Activated T-helper 1 cell treated with anti-CD3 and anti-CD28 coated beads, Interleukin-12 subunit alpha, Interleukin-12 subunit beta, Interleukin-2, Interleukin-4 antibody, amounts not matched to agents 30 ng/mL and 10 ng/mL and 1 ng/mL, durations not matched to agents 14 hours and 24 hours and 36 hours (primary cell): ENCODE measurements at regions of chr13 and their contacts with region 1.

Region 1: DNA sequence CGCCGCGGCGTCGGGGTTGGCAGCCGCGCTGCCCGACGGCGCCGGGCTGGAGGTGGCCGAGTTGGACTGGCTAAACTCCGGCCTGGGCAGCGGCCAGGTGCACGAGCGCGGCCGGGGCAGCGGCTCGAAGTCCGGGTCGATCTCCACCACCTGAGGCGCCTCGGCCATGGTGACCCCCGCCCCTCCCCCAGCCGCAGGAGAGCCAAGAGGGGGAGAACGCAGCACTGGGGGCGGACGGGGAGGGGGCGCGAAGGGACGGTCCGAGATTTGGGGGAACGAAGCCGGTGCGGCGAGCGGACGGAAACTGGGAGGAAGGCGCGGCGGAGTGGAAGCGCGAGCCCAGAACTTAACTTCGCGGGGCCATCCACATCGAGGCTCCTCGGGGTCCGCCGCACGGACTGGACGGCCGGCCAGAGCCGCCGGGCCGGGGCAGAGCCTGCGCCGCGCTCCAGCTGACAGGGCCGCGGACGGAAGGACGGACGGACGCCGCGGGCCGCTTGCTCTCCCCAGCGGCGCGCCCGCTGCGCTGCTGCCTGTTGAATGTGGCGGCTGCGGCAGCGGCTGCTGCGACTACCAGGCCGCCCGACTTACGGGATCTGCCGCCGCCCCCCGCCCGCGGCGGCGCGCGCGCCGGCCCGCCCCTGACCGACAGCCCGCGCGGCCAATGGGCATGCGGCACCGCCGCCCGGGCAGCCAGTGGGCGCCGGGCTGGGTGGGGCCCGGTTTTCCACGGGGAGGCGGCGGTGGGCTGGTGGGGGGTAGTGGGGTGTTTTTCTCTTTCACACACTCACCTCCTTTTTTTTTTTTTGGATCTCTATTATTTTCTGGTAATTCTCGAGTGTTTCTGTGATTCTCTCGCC is at the start of gene FOXO1:
- DNase-seq: peak; percentile 88
- H3K4me3 Mint-ChIP-seq: peak within 1 kb of the TSS; percentile 91
- H3K27ac Mint-ChIP-seq: peak within 1 kb of the TSS; percentile 95
- H3K4me1 Mint-ChIP-seq: peaks cover 45% of the 10 kb centered on the region
- H3K27me3 Mint-ChIP-seq: peaks cover 2% of the 10 kb centered on the region
- total RNA-seq, gene FOXO1: 41.9 and 43.1 TPM in 2 replicates

Region 2: DNA sequence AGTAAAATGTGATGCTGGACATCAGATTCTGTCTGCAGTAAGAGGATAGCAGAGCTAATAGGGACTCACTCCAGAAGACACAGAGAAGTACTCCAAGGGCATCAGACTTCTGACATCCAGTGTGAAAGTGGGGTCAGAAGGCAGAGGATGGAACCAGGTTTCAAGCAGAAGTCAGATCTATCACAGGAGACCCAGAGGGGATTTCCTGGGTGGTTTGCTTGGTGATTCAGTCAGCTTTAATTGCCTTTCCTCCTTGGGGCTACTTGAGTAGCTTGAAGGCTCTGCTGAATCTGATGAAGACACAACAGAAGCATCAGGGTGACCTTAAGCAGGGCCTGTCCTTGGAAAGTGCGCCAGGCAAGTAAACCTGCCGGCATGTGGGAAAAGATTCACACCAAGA is 710.2 kb before region 1 on chr13:
- intact Hi-C with region 1: loop called (anchors 1 kb)
- DNase-seq: peak; percentile 41
- H3K4me3 Mint-ChIP-seq: peak overlapping the region; percentile 54
- H3K27ac Mint-ChIP-seq: peak overlapping the region; percentile 76
- H3K4me1 Mint-ChIP-seq: peaks cover 38% of the 10 kb centered on the region
- H3K27me3 Mint-ChIP-seq: peaks cover 5% of the 10 kb centered on the region

Region 3: DNA sequence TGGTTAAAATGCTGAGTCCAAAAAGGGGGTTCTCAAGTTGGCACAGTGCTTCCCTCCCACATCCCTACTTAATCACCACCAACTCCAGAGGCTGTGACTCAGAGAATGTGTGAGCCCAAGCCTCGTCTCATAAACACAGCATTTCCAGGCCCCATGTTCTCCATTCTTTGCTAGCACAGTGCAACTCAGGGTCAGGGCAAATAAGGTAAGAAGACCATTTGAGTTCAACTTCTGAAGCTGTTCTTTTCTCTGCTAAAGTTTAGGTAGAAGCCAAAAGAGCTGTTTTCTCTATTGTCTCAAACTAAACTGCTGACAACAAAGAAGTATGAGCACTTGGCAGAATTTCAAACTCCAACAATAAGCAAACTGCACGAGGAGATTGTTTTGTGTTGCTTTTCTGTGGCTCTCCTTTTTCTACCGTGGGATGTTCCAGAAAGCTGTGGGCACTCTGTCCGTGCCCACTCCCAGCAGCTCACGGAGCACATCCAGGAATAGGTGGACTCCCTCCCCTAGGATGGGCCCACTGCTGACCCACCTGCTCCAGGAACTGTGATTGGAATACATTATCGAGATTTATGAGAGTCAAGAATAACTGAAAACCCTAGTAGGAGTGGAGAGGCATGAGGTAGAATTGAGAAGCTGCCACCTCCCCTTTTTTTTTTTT is 516.5 kb before region 1 on chr13:
- intact Hi-C with region 1: loop called (anchors 5 kb)
- DNase-seq: no peak
- H3K4me3 Mint-ChIP-seq: no peak overlapping the region
- H3K27ac Mint-ChIP-seq: no peak overlapping the region
- H3K4me1 Mint-ChIP-seq: peaks cover 67% of the 10 kb centered on the region
- H3K27me3 Mint-ChIP-seq: no peaks in the 10 kb centered on the region

Region 4: DNA sequence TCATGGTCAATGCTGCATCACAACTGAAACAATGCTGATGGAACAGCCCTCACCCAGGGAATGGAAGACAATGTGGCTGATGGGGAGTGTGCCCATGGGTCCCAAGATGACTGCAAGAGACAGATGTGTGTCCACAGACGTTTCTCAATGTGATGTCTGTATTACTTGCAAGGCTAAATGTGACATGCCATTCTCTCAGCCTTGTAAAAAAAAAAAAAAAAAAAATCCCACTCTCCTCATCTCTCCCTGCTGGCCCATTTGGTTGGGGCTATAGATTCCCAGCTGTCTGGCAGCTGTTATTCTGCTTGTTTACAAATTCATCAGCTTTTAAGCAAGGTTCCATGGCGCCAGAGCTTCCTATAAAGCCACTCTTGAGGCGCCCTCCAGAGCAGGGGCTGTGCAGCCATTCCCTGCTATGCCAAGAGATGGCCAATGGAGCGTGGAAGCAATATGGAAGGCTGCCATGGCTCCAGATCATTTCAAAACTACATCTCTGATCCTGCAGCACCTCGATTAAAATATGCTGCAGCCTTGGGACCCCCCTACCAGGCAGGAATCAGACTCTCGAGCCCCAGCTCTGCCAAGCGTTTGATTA is 294.6 kb before region 1 on chr13:
- intact Hi-C with region 1: loop called (anchors 5 kb)
- DNase-seq: no peak
- H3K4me3 Mint-ChIP-seq: peak overlapping the region; percentile 1
- H3K27ac Mint-ChIP-seq: peak overlapping the region; percentile 67
- H3K4me1 Mint-ChIP-seq: peaks cover 46% of the 10 kb centered on the region
- H3K27me3 Mint-ChIP-seq: no peaks in the 10 kb centered on the region

Region 5: DNA sequence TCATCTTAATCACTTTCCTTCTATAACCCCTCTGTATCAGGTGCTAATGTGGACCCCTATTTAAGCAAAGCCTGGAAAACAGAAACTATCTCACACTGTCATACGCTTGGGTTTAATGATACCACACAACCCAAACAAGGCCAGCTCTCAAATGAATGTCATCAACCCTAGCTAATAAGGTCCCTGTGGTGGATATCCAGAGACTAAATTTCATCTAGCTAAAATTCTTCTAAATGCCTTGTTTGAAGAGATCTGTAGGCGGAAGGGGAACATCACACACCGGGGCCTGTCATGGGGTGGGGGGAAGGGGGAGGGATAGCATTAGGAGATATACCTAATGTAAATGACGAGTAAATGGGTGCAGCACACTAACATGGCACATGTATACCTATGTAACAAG is 95.3 kb before region 1 on chr13:
- intact Hi-C with region 1: loop called (anchors 5 kb)
- DNase-seq: no peak
- H3K4me3 Mint-ChIP-seq: peak overlapping the region; percentile 15
- H3K27ac Mint-ChIP-seq: peak overlapping the region; percentile 67
- H3K4me1 Mint-ChIP-seq: peaks cover 67% of the 10 kb centered on the region
- H3K27me3 Mint-ChIP-seq: no peaks in the 10 kb centered on the region

Region 6: GRCh38 chr13:40764587-40765403 is 98.5 kb after region 1 on chr13:
- intact Hi-C with region 1: loop called (anchors 2 kb)
- DNase-seq: no peak
- H3K4me3 Mint-ChIP-seq: peak overlapping the region; percentile 23
- H3K27ac Mint-ChIP-seq: peak overlapping the region; percentile 88
- H3K4me1 Mint-ChIP-seq: peaks cover 39% of the 10 kb centered on the region
- H3K27me3 Mint-ChIP-seq: no peaks in the 10 kb centered on the region